SK-N-SH (cell line): ENCODE measurements at regions of chr11 and their contacts with region 1.

Region 1: GRCh38 chr11:8006349-8006977 is 19.3 kb downstream of the EIF3F start:
- DNase-seq: peak; percentile 77
- H3K4me3 ChIP-seq: peak overlapping the region in 1 of 2 experiments; percentile 16; a peak in 1 of 4 replicates
- H3K27ac ChIP-seq: no peak overlapping the region
- H3K4me1 ChIP-seq: no peaks in the 10 kb centered on the region
- H3K27me3 ChIP-seq: no peaks in the 10 kb centered on the region
- CTCF ChIP-seq: peak; percentile 94
- EP300 ChIP-seq: no peak
- RAD21 ChIP-seq: peak; percentile 100

Region 2: DNA sequence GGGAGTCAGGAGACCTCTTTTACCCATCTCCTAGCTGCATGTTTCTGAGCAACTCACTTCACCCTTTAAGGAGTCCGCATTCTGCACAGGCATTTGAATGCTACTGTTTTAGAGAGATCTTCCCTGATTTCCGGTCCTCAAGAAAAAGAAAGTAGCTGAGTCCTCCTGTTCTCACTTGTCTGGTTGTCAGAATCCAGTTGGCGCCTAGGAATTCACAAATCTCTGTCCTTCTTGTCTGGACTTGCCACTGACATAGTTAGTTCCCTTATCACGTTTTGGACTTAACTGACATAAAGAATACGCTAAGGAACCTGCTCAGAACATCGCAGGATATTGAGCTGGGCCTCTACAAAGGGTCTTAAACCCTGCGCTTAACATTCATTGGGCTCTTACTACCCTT is 148.5 kb before region 1 on chr11:
- CTCF ChIA-PET with region 1: no interaction called
- POLR2A ChIA-PET with region 1: no interaction called
- DNase-seq: no peak
- H3K4me3 ChIP-seq: no peak overlapping the region
- H3K27ac ChIP-seq: no peak overlapping the region
- H3K4me1 ChIP-seq: no peaks in the 10 kb centered on the region
- H3K27me3 ChIP-seq: peaks cover 10% of the 10 kb centered on the region; the same call in 1 of the 2 replicates
- CTCF ChIP-seq: no peak
- EP300 ChIP-seq: no peak
- RAD21 ChIP-seq: no peak

Region 3: GRCh38 chr11:8018484-8019313 is 12.2 kb after region 1 on chr11:
- CTCF ChIA-PET with region 1: interaction called, 90 read pairs
- POLR2A ChIA-PET with region 1: no interaction called
- DNase-seq: peak; percentile 93
- H3K4me3 ChIP-seq: peak overlapping the region; percentile 62 to 72
- H3K27ac ChIP-seq: peak overlapping the region in 1 of 2 experiments; percentile 38; a peak in 2 of 4 replicates
- H3K4me1 ChIP-seq: peaks cover 10 to 16% of the 10 kb centered on the region in 2 experiments; a peak in 3 of 4 replicates
- H3K27me3 ChIP-seq: no peaks in the 10 kb centered on the region
- CTCF ChIP-seq: no peak
- EP300 ChIP-seq: no peak
- RAD21 ChIP-seq: no peak

Region 4: GRCh38 chr11:8033305-8034105 is 27.0 kb after region 1 on chr11:
- CTCF ChIA-PET with region 1: interaction called, 33 read pairs
- POLR2A ChIA-PET with region 1: no interaction called
- DNase-seq: peak; percentile 91
- H3K4me3 ChIP-seq: no peak overlapping the region
- H3K27ac ChIP-seq: peak overlapping the region in 1 of 2 experiments; percentile 31; a peak in 1 of 4 replicates
- H3K4me1 ChIP-seq: peaks cover 0 to 46% of the 10 kb centered on the region in 2 experiments; a peak in 1 of 4 replicates
- H3K27me3 ChIP-seq: no peaks in the 10 kb centered on the region
- CTCF ChIP-seq: peak; percentile 88
- EP300 ChIP-seq: no peak
- RAD21 ChIP-seq: peak; percentile 95

Region 5: GRCh38 chr11:8070417-8071115 is 64.1 kb after region 1 on chr11:
- CTCF ChIA-PET with region 1: interaction called, 32 read pairs
- POLR2A ChIA-PET with region 1: no interaction called
- DNase-seq: peak; percentile 73
- H3K4me3 ChIP-seq: no peak overlapping the region
- H3K27ac ChIP-seq: peak overlapping the region in 1 of 2 experiments; percentile 99; a peak in 2 of 4 replicates
- H3K4me1 ChIP-seq: peaks cover 17 to 50% of the 10 kb centered on the region in 2 experiments
- H3K27me3 ChIP-seq: no peaks in the 10 kb centered on the region; the same call in 1 of the 2 replicates
- CTCF ChIP-seq: peak; percentile 59
- EP300 ChIP-seq: no peak
- RAD21 ChIP-seq: peak; percentile 87

Region 6: GRCh38 chr11:8099291-8099899 is 92.9 kb after region 1 on chr11:
- CTCF ChIA-PET with region 1: interaction called, 574 read pairs
- POLR2A ChIA-PET with region 1: interaction called, 7 read pairs
- DNase-seq: peak; percentile 69
- H3K4me3 ChIP-seq: no peak overlapping the region; a peak in 1 of 4 replicates
- H3K27ac ChIP-seq: 0 out of 4 replicates have a peak overlapping the region, but pooled peaks of 1 of the 2 experiments have one; percentile 33
- H3K4me1 ChIP-seq: peaks cover 2 to 6% of the 10 kb centered on the region in 2 experiments; a peak in 3 of 4 replicates
- H3K27me3 ChIP-seq: no peaks in the 10 kb centered on the region
- CTCF ChIP-seq: peak; percentile 92
- EP300 ChIP-seq: no peak
- RAD21 ChIP-seq: peak; percentile 80

Region 7: DNA sequence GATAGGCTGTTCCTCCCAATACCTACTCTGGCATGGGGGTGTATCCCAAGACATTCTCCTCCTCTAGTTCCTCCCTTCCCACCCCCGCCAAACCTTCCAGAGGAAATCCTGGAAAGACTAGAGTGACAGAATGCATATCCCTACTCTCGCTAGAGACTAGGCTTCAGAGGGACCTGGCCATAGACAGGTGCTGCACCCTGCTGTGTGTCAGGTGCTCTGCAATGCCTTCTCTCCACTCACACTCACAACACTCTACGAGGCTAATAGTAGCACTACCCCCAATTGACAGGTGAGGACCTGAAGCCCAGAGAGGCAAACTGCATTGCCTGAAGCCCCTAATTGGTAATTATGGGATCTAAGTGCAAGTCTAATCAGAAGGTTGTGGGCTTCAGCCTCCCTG is 303.4 kb after region 1 on chr11:
- CTCF ChIA-PET with region 1: no interaction called
- POLR2A ChIA-PET with region 1: no interaction called
- DNase-seq: peak; percentile 47
- H3K4me3 ChIP-seq: no peak overlapping the region
- H3K27ac ChIP-seq: no peak overlapping the region
- H3K4me1 ChIP-seq: peaks cover 0 to 2% of the 10 kb centered on the region in 2 experiments; a peak in 1 of 4 replicates
- H3K27me3 ChIP-seq: no peaks in the 10 kb centered on the region
- CTCF ChIP-seq: no peak
- EP300 ChIP-seq: no peak
- RAD21 ChIP-seq: peak; percentile 74

Region 8: DNA sequence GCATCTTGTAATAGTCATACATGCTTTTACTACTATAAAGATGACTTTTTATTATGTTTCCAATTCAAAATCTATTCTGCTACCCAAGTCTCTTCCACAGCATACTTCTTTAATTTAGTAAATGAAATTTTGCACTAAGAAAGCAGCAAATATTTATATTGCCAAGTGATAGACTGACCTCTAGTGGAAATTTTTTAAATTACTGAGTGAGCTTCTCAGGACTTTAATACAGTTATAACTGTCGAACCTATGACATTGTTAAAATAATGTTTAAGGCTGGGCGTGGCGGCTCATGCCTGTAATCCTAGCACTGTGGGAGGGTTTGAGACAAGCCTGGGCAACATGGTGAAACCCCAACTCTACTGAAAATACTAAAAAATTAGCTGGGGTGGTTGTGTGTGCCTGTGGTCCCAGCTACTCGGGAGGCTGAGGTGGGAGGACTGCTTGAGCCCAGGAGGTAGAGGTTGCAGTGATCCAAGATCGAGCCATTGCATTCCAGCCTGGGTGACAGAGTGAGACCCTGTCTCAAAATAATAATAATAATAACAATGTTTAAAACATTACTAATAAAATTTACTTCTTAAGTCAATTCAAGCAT is 560.2 kb after region 1 on chr11:
- CTCF ChIA-PET with region 1: interaction called, 11 read pairs
- POLR2A ChIA-PET with region 1: no interaction called
- DNase-seq: peak; percentile 14
- H3K4me3 ChIP-seq: peak overlapping the region in 1 of 2 experiments; percentile 17; a peak in 1 of 4 replicates
- H3K27ac ChIP-seq: no peak overlapping the region; a peak in 1 of 4 replicates
- H3K4me1 ChIP-seq: peaks cover 0 to 10% of the 10 kb centered on the region in 2 experiments; a peak in 1 of 4 replicates
- H3K27me3 ChIP-seq: no peaks in the 10 kb centered on the region
- CTCF ChIP-seq: peak; percentile 84
- EP300 ChIP-seq: no peak
- RAD21 ChIP-seq: peak; percentile 89